ENCODE measurements at regions of chr2 and their contacts with region 1.

Region 1: GRCh38 chr2:12844511-12844910 is 127.8 kb downstream of the TRIB2 start:
- DNase-seq: peak; percentile 67
- ATAC-seq: peak; percentile 88

Region 2: GRCh38 chr2:12918835-12919445 is 74.4 kb after region 1 on chr2:
- intact Hi-C with region 1: loop called (anchors 10 kb)
- DNase-seq: peak; percentile 84
- ATAC-seq: peak; percentile 95

Region 3: DNA sequence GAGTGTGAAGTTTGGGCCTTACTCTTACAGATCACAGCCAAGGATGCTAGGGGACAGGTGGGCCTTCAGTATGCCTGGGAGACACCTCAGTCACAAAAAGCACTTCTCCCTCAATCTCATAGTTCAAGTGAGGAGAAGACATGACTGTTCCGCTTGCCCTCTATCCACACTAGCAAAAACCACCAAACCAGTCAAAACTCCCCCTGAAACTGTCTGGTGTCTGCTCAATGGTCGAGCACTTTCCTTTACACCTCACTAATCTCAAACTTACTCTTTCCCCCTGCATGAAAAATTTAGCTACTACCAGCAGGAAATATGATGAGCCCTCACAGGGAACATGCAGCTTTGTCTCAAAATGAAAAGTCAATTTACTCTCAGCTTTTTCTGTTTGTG is 104.4 kb after region 1 on chr2:
- intact Hi-C with region 1: no loop called
- DNase-seq: no peak
- ATAC-seq: no peak